Naive thymus-derived CD4-positive, alpha-beta T cell (primary cell): ENCODE measurements at regions of chr7 and their contacts with region 1.

Region 1: GRCh38 chr7:112449902-112450806 is at the start of gene IFRD1:
- DNase-seq: peak; percentile 96 to 100 (median 98)
- ATAC-seq: peak; percentile 92
- H3K4me3 ChIP-seq: peak within 1 kb of the TSS; percentile 99
- H3K4me3 Mint-ChIP-seq: peak within 1 kb of the TSS; percentile 96 to 100 (median 98)
- H3K27ac ChIP-seq: peak within 1 kb of the TSS; percentile 96
- H3K27ac Mint-ChIP-seq: peak within 1 kb of the TSS; percentile 89 to 99 (median 99)
- H3K4me1 ChIP-seq: peaks cover 10 to 14% of the 10 kb centered on the region in 2 donors
- H3K4me1 Mint-ChIP-seq: peaks cover 24 to 54% (median 45%) of the 10 kb centered on the region in 7 donors
- H3K27me3 ChIP-seq: no peaks in the 10 kb centered on the region
- H3K27me3 Mint-ChIP-seq: no peaks in the 10 kb centered on the region
- total RNA-seq, gene IFRD1: 32.2 to 250 (median 63.2) TPM

Region 2: DNA sequence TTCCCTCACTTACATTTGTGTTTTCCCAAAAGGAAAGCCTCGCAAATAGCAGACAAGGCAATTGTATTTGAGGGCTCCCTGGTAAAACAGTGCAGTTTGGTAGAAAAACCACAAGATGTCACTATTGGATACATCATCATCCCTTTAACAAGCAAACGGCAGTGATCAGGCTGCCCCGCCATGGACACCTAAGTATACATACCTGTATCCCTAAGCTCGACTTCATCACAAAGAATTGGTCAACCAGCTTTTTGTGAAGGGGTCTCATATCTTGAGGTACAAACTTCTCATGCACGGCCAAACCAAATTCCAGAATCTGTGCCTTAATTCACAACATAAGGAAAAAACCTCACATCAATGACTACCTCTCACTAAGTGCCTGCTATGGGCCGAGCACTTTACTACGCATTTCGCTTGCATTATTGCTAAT is 708.3 kb before region 1 on chr7:
- CTCF ChIA-PET with region 1: interaction called, 11 read pairs
- POLR2A ChIA-PET with region 1: no interaction called
- intact Hi-C with region 1: no loop called
- DNase-seq: peak in 7 of 9 donors; percentile 20 to 56 (median 47)
- ATAC-seq: peak; percentile 84
- H3K4me3 ChIP-seq: no peak overlapping the region
- H3K4me3 Mint-ChIP-seq: no peak overlapping the region
- H3K27ac ChIP-seq: no peak overlapping the region
- H3K27ac Mint-ChIP-seq: no peak overlapping the region
- H3K4me1 ChIP-seq: no peaks in the 10 kb centered on the region
- H3K4me1 Mint-ChIP-seq: no peaks in the 10 kb centered on the region
- H3K27me3 ChIP-seq: no peaks in the 10 kb centered on the region
- H3K27me3 Mint-ChIP-seq: peaks cover 0 to 11% (median 2%) of the 10 kb centered on the region in 5 donors

Region 3: GRCh38 chr7:111803015-111803758 is 647.0 kb before region 1 on chr7:
- CTCF ChIA-PET with region 1: no interaction called
- POLR2A ChIA-PET with region 1: no interaction called
- intact Hi-C with region 1: no loop called
- DNase-seq: no peak
- ATAC-seq: no peak
- H3K4me3 ChIP-seq: no peak overlapping the region
- H3K4me3 Mint-ChIP-seq: no peak overlapping the region
- H3K27ac ChIP-seq: no peak overlapping the region
- H3K27ac Mint-ChIP-seq: no peak overlapping the region
- H3K4me1 ChIP-seq: no peaks in the 10 kb centered on the region
- H3K4me1 Mint-ChIP-seq: no peaks in the 10 kb centered on the region
- H3K27me3 ChIP-seq: no peaks in the 10 kb centered on the region
- H3K27me3 Mint-ChIP-seq: peaks cover 0 to 4% (median 0%) of the 10 kb centered on the region in 5 donors

Region 4: GRCh38 chr7:112248598-112248997 is 201.6 kb before region 1 on chr7:
- CTCF ChIA-PET with region 1: no interaction called
- POLR2A ChIA-PET with region 1: no interaction called
- intact Hi-C with region 1: no loop called
- DNase-seq: no peak
- ATAC-seq: no peak
- H3K4me3 ChIP-seq: no peak overlapping the region
- H3K4me3 Mint-ChIP-seq: no peak overlapping the region
- H3K27ac ChIP-seq: no peak overlapping the region
- H3K27ac Mint-ChIP-seq: no peak overlapping the region
- H3K4me1 ChIP-seq: no peaks in the 10 kb centered on the region
- H3K4me1 Mint-ChIP-seq: peaks cover 0 to 54% (median 38%) of the 10 kb centered on the region in 7 donors
- H3K27me3 ChIP-seq: no peaks in the 10 kb centered on the region
- H3K27me3 Mint-ChIP-seq: no peaks in the 10 kb centered on the region

Region 5: DNA sequence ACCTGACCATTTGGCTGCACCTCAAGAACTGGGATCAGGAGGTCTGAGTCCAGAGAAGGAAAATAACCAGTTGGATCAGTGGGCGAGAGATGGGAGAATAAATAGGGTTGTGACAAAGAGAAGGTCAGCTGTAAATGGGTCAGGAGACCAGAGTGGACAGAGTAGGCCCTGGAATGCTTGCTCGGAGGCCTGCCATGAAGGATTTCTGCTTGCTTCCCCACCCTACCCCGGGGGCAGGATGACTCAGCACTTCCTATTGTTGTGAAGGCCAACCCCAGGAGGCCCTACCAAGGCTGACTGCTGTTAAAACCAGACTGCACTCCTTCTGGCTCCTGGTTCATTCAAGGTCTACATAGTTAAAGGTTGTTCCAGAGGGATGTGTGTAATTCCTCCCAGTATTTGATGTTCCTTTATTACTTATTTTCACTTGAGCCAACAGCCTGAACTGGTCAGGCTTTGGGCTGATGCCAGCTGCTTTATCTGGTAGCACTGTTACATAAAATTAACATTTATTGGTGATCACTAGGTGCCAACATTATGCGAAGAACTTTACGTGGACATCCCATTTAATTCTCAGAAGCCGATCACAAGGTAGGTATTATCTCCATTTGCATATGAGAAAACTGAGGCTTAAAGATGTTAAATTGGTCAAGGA is 27.2 kb before region 1 on chr7:
- CTCF ChIA-PET with region 1: interaction called, 3 read pairs
- POLR2A ChIA-PET with region 1: interaction called, 13 read pairs
- intact Hi-C with region 1: loop called in 1 of 2 experiments (anchors 1 kb)
- DNase-seq: no peak
- ATAC-seq: peak; percentile 45
- H3K4me3 ChIP-seq: no peak overlapping the region
- H3K4me3 Mint-ChIP-seq: peak overlapping the region in 2 of 10 donors; percentile 51 to 52
- H3K27ac ChIP-seq: no peak overlapping the region
- H3K27ac Mint-ChIP-seq: peak overlapping the region in 5 of 9 donors; percentile 14 to 76 (median 71)
- H3K4me1 ChIP-seq: peaks cover 0 to 16% of the 10 kb centered on the region in 2 donors
- H3K4me1 Mint-ChIP-seq: peaks cover 14 to 29% (median 25%) of the 10 kb centered on the region in 7 donors
- H3K27me3 ChIP-seq: no peaks in the 10 kb centered on the region
- H3K27me3 Mint-ChIP-seq: peaks cover 0 to 2% (median 0%) of the 10 kb centered on the region in 5 donors

Region 6: DNA sequence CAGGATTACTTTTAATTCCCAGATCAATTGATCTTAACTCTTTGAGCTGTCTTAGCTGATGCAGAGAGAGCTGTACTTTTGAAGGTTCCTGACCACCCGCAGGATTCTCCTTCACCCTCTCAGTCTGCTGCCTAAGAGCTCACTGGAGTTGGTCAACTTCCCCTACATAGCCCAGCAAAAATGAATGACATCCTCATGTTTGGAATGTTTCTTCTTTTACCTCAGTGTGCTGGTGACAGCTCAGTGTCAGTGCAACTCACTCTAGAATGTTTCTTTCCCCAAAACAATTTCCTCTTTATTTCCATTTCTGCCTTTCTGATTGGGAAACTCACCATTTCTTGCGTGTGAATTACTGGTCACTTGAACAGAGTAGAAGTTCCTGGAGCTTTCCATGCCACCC is 79.4 kb after region 1 on chr7:
- CTCF ChIA-PET with region 1: no interaction called
- POLR2A ChIA-PET with region 1: no interaction called
- intact Hi-C with region 1: no loop called
- DNase-seq: no peak
- ATAC-seq: no peak
- H3K4me3 ChIP-seq: no peak overlapping the region
- H3K4me3 Mint-ChIP-seq: no peak overlapping the region
- H3K27ac ChIP-seq: no peak overlapping the region
- H3K27ac Mint-ChIP-seq: no peak overlapping the region
- H3K4me1 ChIP-seq: no peaks in the 10 kb centered on the region
- H3K4me1 Mint-ChIP-seq: no peaks in the 10 kb centered on the region
- H3K27me3 ChIP-seq: no peaks in the 10 kb centered on the region
- H3K27me3 Mint-ChIP-seq: peaks cover 15 to 31% (median 25%) of the 10 kb centered on the region in 5 donors

Region 7: GRCh38 chr7:112789817-112790585 is 339.8 kb after region 1 on chr7 and contains the start of gene TMEM168:
- CTCF ChIA-PET with region 1: no interaction called
- POLR2A ChIA-PET with region 1: interaction called, 4 read pairs
- intact Hi-C with region 1: loop called (anchors 1 to 2 kb)
- DNase-seq: peak; percentile 75 to 91 (median 83)
- ATAC-seq: peak; percentile 94
- H3K4me3 ChIP-seq: peak within 1 kb of the TSS; percentile 98
- H3K4me3 Mint-ChIP-seq: peak within 1 kb of the TSS; percentile 90 to 97 (median 95)
- H3K27ac ChIP-seq: peak within 1 kb of the TSS; percentile 85
- H3K27ac Mint-ChIP-seq: peak within 1 kb of the TSS; percentile 63 to 93 (median 88)
- H3K4me1 ChIP-seq: peaks cover 13 to 23% of the 10 kb centered on the region in 2 donors
- H3K4me1 Mint-ChIP-seq: peaks cover 27 to 50% (median 36%) of the 10 kb centered on the region in 7 donors
- H3K27me3 ChIP-seq: no peaks in the 10 kb centered on the region
- H3K27me3 Mint-ChIP-seq: no peaks in the 10 kb centered on the region
- total RNA-seq, gene TMEM168: 18.3 to 30.1 (median 20.7) TPM

Region 8: DNA sequence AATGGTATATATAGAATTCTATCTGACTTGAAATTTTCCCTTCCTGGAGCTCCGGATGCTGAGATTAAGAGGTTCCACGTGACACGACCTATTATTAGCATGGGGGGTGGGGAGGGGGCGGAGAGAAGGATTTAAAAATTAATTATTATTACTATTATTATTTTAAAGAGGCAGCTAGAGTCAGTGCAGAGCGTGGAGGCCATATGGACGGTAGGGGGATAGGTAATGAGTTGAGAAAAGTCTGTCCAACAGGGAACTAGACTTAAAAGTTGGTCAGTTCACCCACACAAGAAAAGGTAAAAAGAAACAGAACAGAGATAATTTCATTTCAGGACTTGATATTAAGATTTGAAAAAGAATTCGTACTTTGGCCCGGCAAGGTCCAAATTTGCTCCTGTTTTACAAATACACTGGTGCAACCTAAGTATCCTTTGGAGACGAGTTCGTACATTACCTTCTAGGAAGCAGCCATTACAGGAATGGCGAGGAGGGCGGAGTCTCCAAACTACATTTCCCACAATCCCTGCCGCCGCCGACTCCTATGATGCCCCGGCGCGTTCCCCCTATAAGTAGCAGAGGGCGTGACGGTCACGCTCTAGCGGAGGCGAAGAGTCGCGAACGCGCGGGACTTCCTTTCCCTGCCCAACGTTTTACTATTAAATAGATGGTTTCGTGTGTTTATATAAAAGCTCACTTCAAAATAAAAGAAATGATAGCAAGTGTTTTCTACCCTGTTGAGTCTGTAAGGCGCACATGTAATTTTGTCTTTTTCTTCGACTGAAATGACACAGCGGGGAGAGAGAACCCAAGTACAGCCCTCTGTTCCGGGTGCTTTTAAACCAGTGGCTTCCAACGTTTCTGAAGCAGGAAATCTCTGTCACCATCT is 668.2 kb after region 1 on chr7 and contains the start of gene SMIM30:
- CTCF ChIA-PET with region 1: no interaction called
- POLR2A ChIA-PET with region 1: interaction called, 3 read pairs
- intact Hi-C with region 1: loop called (anchors 1 kb)
- DNase-seq: peak; percentile 59 to 90 (median 86)
- ATAC-seq: peak; percentile 100
- H3K4me3 ChIP-seq: peak within 1 kb of the TSS; percentile 75
- H3K4me3 Mint-ChIP-seq: peak within 1 kb of the TSS; percentile 81 to 99 (median 96)
- H3K27ac ChIP-seq: peak within 1 kb of the TSS; percentile 80
- H3K27ac Mint-ChIP-seq: peak within 1 kb of the TSS; percentile 82 to 99 (median 94)
- H3K4me1 ChIP-seq: peaks cover 0 to 6% of the 10 kb centered on the region in 2 donors
- H3K4me1 Mint-ChIP-seq: peaks cover 6 to 32% (median 22%) of the 10 kb centered on the region in 7 donors
- H3K27me3 ChIP-seq: no peaks in the 10 kb centered on the region
- H3K27me3 Mint-ChIP-seq: no peaks in the 10 kb centered on the region
- total RNA-seq, gene SMIM30: 9.3 to 21.0 (median 20.5) TPM